PC-3 (cell line): ENCODE measurements at regions of chr5 and their contacts with region 1.

Region 1: GRCh38 chr5:9207817-9208418 is 338.0 kb downstream of the SEMA5A start:
- DNase-seq: peak; percentile 90
- ATAC-seq: peak; percentile 51
- H3K4me3 ChIP-seq: no peak overlapping the region
- H3K27ac ChIP-seq: no peak overlapping the region
- H3K4me1 ChIP-seq: peaks cover 36% of the 10 kb centered on the region
- H3K27me3 ChIP-seq: no peaks in the 10 kb centered on the region
- CTCF ChIP-seq: peak; percentile 90

Region 2: DNA sequence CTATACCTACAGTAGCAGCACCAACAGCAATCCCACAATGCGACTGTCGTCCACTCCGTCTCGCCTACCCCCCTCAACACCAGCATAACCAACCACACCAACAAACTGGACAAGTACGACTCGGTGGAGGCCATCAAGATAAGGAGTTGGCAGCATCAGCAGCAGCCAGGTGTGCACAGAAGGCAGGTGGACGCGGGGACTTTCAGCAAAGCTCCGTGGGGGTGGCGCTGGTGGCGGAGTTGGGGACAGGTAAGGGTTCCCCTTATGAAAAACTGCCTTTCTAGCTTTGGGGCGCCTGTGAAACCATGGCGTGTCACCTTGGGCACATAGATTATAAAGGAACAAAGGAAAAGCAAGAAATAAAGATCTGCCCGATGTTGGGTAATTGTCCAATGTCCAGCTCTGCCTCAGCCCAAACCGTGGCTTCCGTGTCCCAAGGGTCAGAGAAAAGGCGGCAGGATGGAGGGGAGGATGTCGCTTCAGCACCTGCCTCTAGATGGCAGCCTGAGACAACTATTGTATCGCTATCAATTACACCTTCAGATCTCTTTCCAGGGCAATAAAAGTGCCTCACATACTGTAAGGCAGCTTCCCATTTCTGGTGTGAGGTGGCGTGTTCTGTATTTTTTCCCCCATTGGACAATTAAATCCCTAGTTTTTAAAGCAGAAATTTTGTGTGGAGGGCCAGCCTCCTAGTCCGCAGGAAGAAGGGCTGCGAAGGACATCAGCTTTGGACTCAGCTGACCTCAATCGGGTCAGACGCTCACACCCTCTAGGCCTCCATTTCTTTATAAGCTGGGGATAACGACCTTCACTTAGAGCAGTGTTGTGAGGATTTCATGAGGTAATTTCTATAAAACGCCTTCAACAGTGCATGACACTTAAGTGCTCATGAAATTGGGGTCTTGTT is 1280.2 kb before region 1 on chr5:
- CTCF ChIA-PET with region 1: no interaction called
- POLR2A ChIA-PET with region 1: no interaction called
- intact Hi-C with region 1: loop called (anchors 5 kb)
- DNase-seq: peak; percentile 86
- ATAC-seq: peak; percentile 97
- H3K4me3 ChIP-seq: no peak overlapping the region
- H3K27ac ChIP-seq: no peak overlapping the region
- H3K4me1 ChIP-seq: no peaks in the 10 kb centered on the region
- H3K27me3 ChIP-seq: peaks cover 22% of the 10 kb centered on the region; the same call in 1 of the 2 replicates
- CTCF ChIP-seq: peak; percentile 98

Region 3: DNA sequence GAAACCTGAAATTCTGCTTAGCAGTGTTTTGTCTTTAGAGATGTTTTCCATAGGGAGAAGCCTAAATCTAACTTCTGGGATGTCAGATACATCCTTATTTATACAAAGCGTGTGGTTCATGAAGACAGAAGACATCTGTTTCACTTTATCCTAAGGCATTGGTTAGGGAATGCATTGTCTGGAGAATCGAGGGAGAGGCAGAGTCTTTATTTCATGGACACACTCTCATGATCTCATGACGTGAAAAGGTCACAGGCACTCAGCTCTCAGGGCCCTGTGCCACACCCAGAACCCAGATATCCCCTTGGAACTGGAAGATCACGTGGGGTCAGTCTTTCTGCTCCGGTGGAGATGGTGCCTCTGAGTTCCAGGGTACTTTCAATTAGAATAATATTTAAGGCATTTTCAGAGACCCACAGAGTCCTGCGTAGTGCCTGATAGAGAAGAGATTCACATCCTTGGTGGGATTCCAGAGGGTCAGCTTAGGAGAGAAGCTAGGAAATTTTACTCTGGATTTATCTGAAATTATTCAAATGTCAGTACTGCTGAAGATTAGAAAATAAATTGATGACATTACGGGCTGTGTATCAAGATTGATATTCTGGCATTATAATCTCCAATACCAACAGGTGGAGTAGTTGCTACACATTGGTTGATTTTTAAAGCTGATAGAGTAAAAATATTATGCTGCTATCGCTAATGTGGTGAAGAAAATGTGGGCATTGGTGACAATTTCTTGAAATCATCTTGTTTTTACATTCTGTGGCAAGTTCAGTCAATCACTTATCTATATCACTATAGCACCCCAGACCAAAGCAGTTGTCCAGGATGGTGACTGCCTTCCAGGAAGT is 960.6 kb before region 1 on chr5:
- CTCF ChIA-PET with region 1: no interaction called
- POLR2A ChIA-PET with region 1: no interaction called
- intact Hi-C with region 1: loop called (anchors 5 kb)
- DNase-seq: peak; percentile 58
- ATAC-seq: peak; percentile 31; the same call in 1 of the 2 replicates
- H3K4me3 ChIP-seq: peak overlapping the region; percentile 31
- H3K27ac ChIP-seq: no peak overlapping the region
- H3K4me1 ChIP-seq: peaks cover 3% of the 10 kb centered on the region; the same call in 1 of the 2 replicates
- H3K27me3 ChIP-seq: no peaks in the 10 kb centered on the region
- CTCF ChIP-seq: peak; percentile 95

Region 4: GRCh38 chr5:8756498-8757084 is 451.3 kb before region 1 on chr5:
- CTCF ChIA-PET with region 1: no interaction called
- POLR2A ChIA-PET with region 1: no interaction called
- intact Hi-C with region 1: loop called (anchors 1 kb)
- DNase-seq: peak; percentile 87
- ATAC-seq: peak; percentile 85
- H3K4me3 ChIP-seq: no peak overlapping the region
- H3K27ac ChIP-seq: no peak overlapping the region
- H3K4me1 ChIP-seq: no peaks in the 10 kb centered on the region
- H3K27me3 ChIP-seq: no peaks in the 10 kb centered on the region
- CTCF ChIP-seq: peak; percentile 96

Region 5: GRCh38 chr5:8864053-8864452 is 343.9 kb before region 1 on chr5:
- CTCF ChIA-PET with region 1: no interaction called
- POLR2A ChIA-PET with region 1: no interaction called
- intact Hi-C with region 1: loop called (anchors 5 kb)
- DNase-seq: peak; percentile 85
- ATAC-seq: peak; percentile 78
- H3K4me3 ChIP-seq: no peak overlapping the region
- H3K27ac ChIP-seq: no peak overlapping the region
- H3K4me1 ChIP-seq: no peaks in the 10 kb centered on the region
- H3K27me3 ChIP-seq: no peaks in the 10 kb centered on the region
- CTCF ChIP-seq: peak; percentile 97

Region 6: GRCh38 chr5:9156282-9156681 is 51.6 kb before region 1 on chr5:
- CTCF ChIA-PET with region 1: no interaction called
- POLR2A ChIA-PET with region 1: no interaction called
- intact Hi-C with region 1: loop called (anchors 1 kb)
- DNase-seq: peak; percentile 86
- ATAC-seq: peak; percentile 87
- H3K4me3 ChIP-seq: no peak overlapping the region
- H3K27ac ChIP-seq: no peak overlapping the region
- H3K4me1 ChIP-seq: peaks cover 14% of the 10 kb centered on the region
- H3K27me3 ChIP-seq: no peaks in the 10 kb centered on the region
- CTCF ChIP-seq: peak; percentile 95

Region 7: DNA sequence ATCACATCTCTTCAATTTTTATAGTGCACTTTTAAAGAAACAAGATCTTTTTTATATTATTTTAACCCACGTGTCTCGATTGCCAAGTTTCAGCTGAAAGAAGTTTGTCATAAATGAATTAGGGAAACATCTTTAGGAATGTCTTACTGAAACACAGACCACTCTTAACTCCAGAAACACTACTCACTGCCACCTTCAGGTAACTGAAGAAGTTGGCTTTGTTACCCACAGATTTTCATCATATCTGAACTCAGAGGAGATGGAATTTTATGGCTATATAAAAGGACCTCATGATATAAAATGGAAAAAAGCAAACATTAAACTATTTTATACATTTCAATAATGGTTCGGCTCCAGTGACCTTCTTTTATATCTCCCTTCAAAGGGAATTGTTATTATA is 180.0 kb after region 1 on chr5:
- CTCF ChIA-PET with region 1: no interaction called
- POLR2A ChIA-PET with region 1: no interaction called
- intact Hi-C with region 1: loop called (anchors 1 kb)
- DNase-seq: peak; percentile 64
- ATAC-seq: peak; percentile 93
- H3K4me3 ChIP-seq: no peak overlapping the region
- H3K27ac ChIP-seq: no peak overlapping the region
- H3K4me1 ChIP-seq: peaks cover under 1% of the 10 kb centered on the region; the same call in 1 of the 2 replicates
- H3K27me3 ChIP-seq: no peaks in the 10 kb centered on the region
- CTCF ChIP-seq: peak; percentile 67